ENCODE measurements at regions of chr20 and their contacts with region 1.

Region 1: GRCh38 chr20:50967586-50967985 is 9.0 kb downstream of the MOCS3 start:
- DNase-seq: no peak
- H3K4me3 Mint-ChIP-seq: no peak overlapping the region
- H3K27ac Mint-ChIP-seq: no peak overlapping the region
- H3K4me1 Mint-ChIP-seq: no peaks in the 10 kb centered on the region
- H3K27me3 Mint-ChIP-seq: peaks cover 11% of the 10 kb centered on the region
- CTCF ChIP-seq: no peak

Region 2: DNA sequence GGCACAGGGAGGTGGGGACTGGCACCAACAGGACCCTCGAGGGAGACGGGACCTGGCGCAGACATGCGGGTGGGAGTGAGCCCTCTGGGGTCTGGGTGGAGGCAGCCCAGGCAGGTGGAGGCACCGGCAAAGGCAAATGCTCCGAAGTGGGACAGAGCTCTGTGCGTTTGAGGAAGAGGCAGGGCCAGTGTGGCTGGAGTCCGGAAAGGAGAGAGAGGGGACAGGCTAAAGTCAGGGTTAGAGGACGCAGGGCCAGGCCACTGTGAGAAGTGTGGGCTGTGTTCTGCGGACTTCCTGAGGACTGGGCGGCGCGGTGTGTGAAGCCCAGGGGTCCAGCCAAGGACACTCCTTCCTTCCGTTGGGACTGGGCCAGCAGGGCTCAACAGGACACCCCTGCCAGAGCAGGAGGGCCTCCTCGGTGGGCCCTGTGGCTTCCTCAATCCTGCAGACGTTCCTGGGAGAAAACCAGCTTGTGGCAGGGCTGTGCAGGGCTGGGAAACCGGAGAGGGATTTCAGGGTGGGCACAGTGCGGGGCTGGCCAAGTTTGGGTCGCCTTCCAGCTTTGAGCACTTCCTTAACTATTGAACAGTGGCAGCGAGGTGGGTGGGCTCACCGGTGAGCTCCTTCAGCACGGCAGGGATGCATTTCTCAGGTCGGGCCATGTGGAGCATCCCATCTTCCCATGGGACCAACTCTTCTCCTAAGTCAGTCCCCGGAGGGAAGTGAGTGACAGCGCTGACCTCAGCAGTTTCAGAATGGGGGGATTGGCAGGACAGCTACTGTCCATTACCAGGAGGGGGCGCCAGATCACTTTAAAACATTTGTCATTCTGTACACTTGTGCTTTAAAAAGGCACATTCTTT is 13.5 kb after region 1 on chr20:
- CTCF ChIA-PET with region 1: interaction called, 22 read pairs
- POLR2A ChIA-PET with region 1: interaction called, 3 read pairs
- intact Hi-C with region 1: no loop called
- DNase-seq: peak; percentile 80
- H3K4me3 Mint-ChIP-seq: no peak overlapping the region
- H3K27ac Mint-ChIP-seq: peak overlapping the region; percentile 97
- H3K4me1 Mint-ChIP-seq: peaks cover 34% of the 10 kb centered on the region
- H3K27me3 Mint-ChIP-seq: no peaks in the 10 kb centered on the region
- CTCF ChIP-seq: peak; percentile 75

Region 3: DNA sequence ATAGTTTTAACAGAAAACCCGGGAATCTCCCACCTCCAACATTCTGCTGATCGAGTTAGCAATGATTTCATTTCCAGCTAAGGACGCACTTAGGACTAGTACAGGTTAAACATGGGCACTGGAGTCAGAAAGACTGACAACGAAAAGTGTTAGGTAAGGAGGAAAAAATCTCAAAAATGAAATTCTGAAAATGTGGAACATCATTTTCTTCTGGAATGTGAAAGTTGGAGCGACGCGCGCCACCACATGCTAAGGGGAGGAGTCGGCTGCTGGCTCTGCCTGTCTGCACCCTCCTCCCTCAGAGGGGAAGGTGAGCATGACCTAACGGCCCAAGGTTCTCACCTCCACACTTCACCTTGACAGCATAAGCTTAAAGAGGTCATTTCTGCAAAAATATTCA is 276.9 kb after region 1 on chr20:
- CTCF ChIA-PET with region 1: no interaction called
- POLR2A ChIA-PET with region 1: no interaction called
- intact Hi-C with region 1: no loop called
- DNase-seq: no peak
- H3K4me3 Mint-ChIP-seq: no peak overlapping the region
- H3K27ac Mint-ChIP-seq: no peak overlapping the region
- H3K4me1 Mint-ChIP-seq: no peaks in the 10 kb centered on the region
- H3K27me3 Mint-ChIP-seq: peaks cover 13% of the 10 kb centered on the region
- CTCF ChIP-seq: no peak

Region 4: DNA sequence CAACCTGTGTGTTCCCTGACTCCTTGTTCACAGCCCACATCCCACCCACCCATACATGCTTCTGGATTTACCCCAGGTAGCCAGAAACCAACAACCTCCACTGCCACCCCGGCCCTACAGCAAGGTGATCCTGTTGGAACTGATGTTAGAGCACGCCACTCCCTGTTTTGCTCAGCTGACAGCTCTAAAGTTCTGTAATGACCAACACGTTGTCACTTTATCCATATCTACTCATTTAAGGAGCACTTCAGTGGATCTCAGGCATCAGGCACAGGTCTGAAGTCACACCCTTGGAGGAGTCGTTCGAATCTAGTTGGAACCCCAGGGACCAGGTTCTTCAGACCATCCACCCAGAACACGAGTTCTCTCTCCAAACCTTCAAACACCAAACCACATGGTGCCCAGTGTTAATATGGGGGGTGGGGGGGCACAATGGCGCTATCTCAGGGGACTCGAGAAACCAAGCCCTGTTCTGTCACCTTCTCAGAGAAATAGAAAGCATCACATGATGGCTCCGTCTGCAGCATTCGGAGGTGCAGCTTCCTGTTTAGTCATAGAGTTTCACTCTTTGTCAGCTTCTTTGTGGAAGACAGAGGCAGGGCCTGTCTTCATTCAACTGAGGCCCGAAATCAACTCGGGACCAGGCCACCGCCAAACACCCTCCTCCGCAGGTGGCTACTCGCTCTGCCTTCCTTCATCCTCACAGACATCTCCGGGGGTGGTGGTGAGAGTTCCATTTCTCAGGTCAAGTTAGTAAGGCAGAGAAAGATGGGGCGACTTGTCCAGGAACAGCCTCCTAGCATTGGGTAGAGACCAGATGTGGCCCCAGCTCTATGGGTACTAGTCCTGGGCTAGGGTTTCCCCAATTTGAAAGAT is 432.7 kb after region 1 on chr20:
- CTCF ChIA-PET with region 1: no interaction called
- POLR2A ChIA-PET with region 1: no interaction called
- intact Hi-C with region 1: no loop called
- DNase-seq: no peak
- H3K4me3 Mint-ChIP-seq: no peak overlapping the region
- H3K27ac Mint-ChIP-seq: no peak overlapping the region
- H3K4me1 Mint-ChIP-seq: no peaks in the 10 kb centered on the region
- H3K27me3 Mint-ChIP-seq: no peaks in the 10 kb centered on the region
- CTCF ChIP-seq: no peak